Heart right ventricle (tissue), 16 donors: ENCODE measurements at regions of chr9 and their contacts with region 1.

Region 1: GRCh38 chr9:14212077-14212476 is 101.9 kb downstream of the NFIB start:
- DNase-seq: no peak
- ATAC-seq: no peak
- H3K4me3 ChIP-seq: no peak overlapping the region
- H3K27ac ChIP-seq: peak overlapping the region in 5 of 10 donors; percentile 6 to 60 (median 10)
- H3K4me1 ChIP-seq: peaks cover 5 to 93% (median 67%) of the 10 kb centered on the region in 9 donors
- H3K27me3 ChIP-seq: no peaks in the 10 kb centered on the region
- CTCF ChIP-seq: no peak

Region 2: DNA sequence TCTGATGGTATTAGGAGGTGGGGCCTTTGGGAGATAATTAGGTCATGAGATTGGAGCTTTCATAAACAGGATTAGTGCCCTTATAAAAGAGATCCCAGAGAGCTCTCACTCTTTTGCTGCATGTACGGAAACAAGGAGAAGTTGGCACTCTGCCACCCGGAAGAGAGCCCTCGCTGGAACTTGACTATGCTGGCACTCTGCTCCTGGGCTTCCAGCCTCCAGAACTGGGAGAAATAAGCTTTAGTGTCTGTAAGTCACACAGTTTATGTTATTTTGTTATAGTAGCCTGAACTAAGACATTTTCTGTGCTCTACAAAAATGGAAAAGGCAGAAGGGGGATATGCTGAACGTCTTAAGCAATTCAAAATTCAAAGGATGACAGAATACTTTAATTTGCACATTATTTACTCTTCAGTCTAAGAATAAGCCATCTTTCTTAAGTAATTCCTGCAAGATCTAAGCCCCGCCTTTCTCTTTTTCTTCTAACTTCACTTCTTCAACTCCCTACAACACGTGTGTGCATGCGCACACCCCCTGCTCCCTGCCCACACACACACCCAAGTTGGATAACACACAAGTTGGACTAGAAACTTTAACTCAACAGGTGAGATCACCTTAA is 84.5 kb after region 1 on chr9:
- intact Hi-C with region 1: loop called in 1 of 10 experiments (anchors 10 kb)
- DNase-seq: peak; percentile 36 to 42
- ATAC-seq: peak in 2 of 8 donors; percentile 35 to 57
- H3K4me3 ChIP-seq: no peak overlapping the region
- H3K27ac ChIP-seq: peak overlapping the region in 6 of 10 donors; percentile 5 to 100 (median 18)
- H3K4me1 ChIP-seq: peaks cover 11 to 96% (median 85%) of the 10 kb centered on the region in 9 donors
- H3K27me3 ChIP-seq: no peaks in the 10 kb centered on the region
- CTCF ChIP-seq: no peak